ENCODE measurements at regions of chr2 and their contacts with region 1.

Region 1: GRCh38 chr2:202147775-202148174 is 74.7 kb downstream of the KIAA2012 start:
- DNase-seq: no peak
- H3K4me3 ChIP-seq: no peak overlapping the region
- H3K27ac ChIP-seq: no peak overlapping the region
- H3K4me1 ChIP-seq: no peaks in the 10 kb centered on the region
- CTCF ChIP-seq: no peak

Region 2: GRCh38 chr2:202127687-202128331 is 20.0 kb before region 1 on chr2:
- CTCF ChIA-PET with region 1: no interaction called
- POLR2A ChIA-PET with region 1: no interaction called
- intact Hi-C with region 1: no loop called
- DNase-seq: no peak
- H3K4me3 ChIP-seq: no peak overlapping the region
- H3K27ac ChIP-seq: no peak overlapping the region
- H3K4me1 ChIP-seq: no peaks in the 10 kb centered on the region
- CTCF ChIP-seq: no peak

Region 3: DNA sequence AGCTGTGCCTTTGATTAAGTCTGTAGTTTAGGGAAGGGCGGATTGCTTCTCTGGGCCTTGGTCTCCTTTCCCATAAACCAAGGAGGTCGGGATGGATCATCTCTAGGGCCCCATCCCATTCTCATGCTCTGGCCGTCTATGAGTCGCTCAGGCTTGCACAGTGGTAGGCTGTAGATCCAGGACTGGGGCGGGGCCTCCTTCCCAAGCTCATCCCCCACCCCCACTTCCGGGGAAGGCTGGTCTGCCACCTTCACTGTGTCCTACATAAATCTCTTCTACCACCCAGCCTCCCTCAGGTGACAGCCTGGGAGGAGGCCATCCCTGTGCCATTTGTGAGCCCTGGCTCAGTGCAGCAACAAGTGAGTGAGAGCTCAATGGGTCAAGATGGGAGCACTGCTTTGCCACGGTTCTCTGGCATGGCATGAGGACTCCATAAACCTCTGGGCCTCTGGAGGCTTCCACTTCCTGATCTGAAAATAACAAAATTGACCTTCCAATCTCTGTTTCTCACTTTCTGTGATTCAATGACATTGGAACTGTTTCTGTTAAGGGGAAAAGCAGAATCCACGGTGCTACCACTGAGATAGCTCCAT is 22.2 kb after region 1 on chr2:
- CTCF ChIA-PET with region 1: no interaction called
- POLR2A ChIA-PET with region 1: interaction called, 10 read pairs
- intact Hi-C with region 1: no loop called
- DNase-seq: no peak
- H3K4me3 ChIP-seq: no peak overlapping the region
- H3K27ac ChIP-seq: no peak overlapping the region
- H3K4me1 ChIP-seq: no peaks in the 10 kb centered on the region
- CTCF ChIP-seq: no peak

Measured in OCI-LY7 (cell line).